Right cardiac atrium (tissue), 5 donors: ENCODE measurements at regions of chr14 and their contacts with region 1.

Region 1: DNA sequence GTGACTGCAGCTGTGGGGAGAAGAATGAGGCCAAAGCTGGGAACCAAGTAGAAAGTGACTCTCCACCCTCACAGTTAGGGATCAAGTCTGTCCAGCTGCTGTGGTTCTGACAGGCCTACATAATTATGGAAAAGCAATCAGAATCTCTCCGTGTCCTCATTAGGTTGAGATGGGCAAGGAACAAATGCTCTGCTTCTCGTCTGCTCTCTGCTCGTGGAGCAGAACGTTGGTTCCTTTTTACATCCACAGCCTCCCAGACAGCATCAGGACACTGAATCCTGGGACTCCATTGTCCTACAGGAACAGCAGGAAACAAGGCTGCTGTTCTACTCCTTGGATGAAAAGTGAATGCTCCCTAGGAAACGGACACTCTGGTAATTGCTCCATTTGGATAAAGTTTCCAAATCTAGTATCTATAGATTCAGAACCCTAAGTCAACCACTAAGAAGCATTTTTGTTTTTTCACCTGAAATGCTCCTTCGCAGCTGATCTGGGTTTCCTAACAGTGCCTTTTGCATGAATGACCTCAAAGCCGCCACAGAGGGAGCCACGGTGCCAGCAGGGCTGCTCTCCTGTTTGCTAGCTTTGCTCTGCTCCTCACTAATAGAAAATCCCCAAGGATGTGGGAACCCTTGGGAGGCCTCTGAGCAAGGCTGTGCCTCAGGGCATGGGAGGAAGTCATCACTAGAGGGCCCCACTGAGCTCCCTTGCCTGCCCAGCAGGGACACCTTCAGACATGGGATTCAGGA is 102.0 kb downstream of the EGLN3 start:
- DNase-seq: peak; percentile 55 to 81 (median 80)
- ATAC-seq: peak; percentile 87 to 95
- H3K4me3 ChIP-seq: no peak overlapping the region
- H3K27ac ChIP-seq: no peak overlapping the region
- H3K4me1 ChIP-seq: no peaks in the 10 kb centered on the region
- H3K27me3 ChIP-seq: no peaks in the 10 kb centered on the region

Region 2: GRCh38 chr14:34098045-34098984 is 249.4 kb after region 1 on chr14:
- intact Hi-C with region 1: loop called in 3 of 4 experiments (anchors 5 kb)
- DNase-seq: peak in 2 of 3 donors; percentile 62 to 63
- ATAC-seq: peak; percentile 40 to 57
- H3K4me3 ChIP-seq: no peak overlapping the region
- H3K27ac ChIP-seq: no peak overlapping the region
- H3K4me1 ChIP-seq: no peaks in the 10 kb centered on the region
- H3K27me3 ChIP-seq: no peaks in the 10 kb centered on the region